CD4-positive, alpha-beta memory T cell (primary cell): ENCODE measurements at regions of chr1 and their contacts with region 1.

Region 1: GRCh38 chr1:147640553-147641165 is 29.7 kb downstream of the ACP6 start:
- DNase-seq: peak; percentile 72 to 85 (median 73)
- H3K4me3 ChIP-seq: no peak overlapping the region
- H3K4me3 Mint-ChIP-seq: peak overlapping the region in 7 of 8 donors; percentile 48 to 80 (median 69)
- H3K27ac ChIP-seq: no peak overlapping the region
- H3K27ac Mint-ChIP-seq: peak overlapping the region in 5 of 7 donors; percentile 74 to 92 (median 79)
- H3K4me1 ChIP-seq: peaks cover 24% of the 10 kb centered on the region
- H3K4me1 Mint-ChIP-seq: peaks cover 26 to 66% (median 44%) of the 10 kb centered on the region in 4 donors
- H3K27me3 ChIP-seq: no peaks in the 10 kb centered on the region
- H3K27me3 Mint-ChIP-seq: no peaks in the 10 kb centered on the region

Region 2: DNA sequence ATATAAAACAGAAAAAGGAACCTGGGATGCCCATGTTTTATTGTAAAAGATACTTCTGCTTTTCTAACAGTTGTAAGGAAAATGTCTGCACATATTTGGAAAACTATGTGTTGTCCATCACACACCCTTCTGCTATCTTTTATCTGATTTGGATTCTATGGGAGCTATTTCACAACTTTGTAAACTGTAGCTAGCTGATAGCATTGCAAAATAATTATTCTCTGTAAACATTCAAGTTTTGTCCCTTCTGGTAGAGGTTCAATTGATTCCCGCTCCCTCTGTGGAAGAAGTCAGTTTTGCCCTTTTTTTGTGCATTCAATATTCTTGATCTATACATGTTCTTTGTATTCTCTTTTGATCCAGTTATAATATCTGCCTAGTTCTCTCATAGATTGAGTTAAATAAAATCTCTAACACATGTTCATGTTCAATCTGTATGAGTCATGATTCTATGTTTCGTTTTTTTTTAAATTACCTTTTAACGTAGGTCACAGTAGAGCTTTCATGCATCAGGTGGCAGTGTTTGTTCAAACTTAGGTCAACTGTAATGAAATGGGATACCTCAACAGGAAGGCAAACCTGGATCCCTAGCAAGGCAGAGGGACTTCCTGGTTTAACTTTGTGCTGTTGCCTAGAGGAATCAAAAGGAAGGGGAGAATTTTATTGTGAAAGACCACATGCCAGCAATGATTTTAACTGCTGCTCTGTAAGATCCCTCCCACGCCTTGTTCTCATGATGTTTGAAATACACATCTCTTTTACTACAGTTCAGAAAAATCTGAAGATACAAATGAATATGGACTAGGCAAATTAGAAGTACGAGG is 125.4 kb before region 1 on chr1:
- CTCF ChIA-PET with region 1: interaction called, 60 read pairs
- POLR2A ChIA-PET with region 1: no interaction called
- intact Hi-C with region 1: loop called (anchors 1 kb)
- DNase-seq: peak in 4 of 5 donors; percentile 9 to 29 (median 24)
- H3K4me3 ChIP-seq: no peak overlapping the region
- H3K4me3 Mint-ChIP-seq: no peak overlapping the region
- H3K27ac ChIP-seq: no peak overlapping the region
- H3K27ac Mint-ChIP-seq: peak overlapping the region in 2 of 7 donors; percentile 39 to 51
- H3K4me1 ChIP-seq: no peaks in the 10 kb centered on the region
- H3K4me1 Mint-ChIP-seq: peaks cover 5 to 7% (median 6%) of the 10 kb centered on the region in 4 donors
- H3K27me3 ChIP-seq: no peaks in the 10 kb centered on the region
- H3K27me3 Mint-ChIP-seq: peaks cover 0 to 9% of the 10 kb centered on the region in 2 donors

Region 3: DNA sequence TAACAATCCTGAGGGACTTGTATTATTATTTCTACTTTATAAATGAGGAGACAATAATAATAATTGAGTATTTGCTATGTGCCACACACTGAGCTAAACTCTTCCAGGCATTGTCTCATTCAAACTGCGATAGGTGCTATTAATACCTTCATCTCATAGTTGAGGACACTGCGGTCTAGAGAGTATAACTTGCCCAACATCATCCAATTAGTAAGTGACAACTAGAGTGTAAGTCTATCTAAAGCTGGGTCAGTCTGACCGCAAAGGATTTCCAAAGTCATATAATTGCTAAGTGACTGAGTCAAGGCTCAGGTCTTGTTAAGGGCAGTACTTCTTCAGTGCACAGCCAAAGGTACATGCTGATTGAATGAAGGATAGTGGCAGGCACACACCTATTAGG is 89.6 kb before region 1 on chr1:
- CTCF ChIA-PET with region 1: no interaction called
- POLR2A ChIA-PET with region 1: no interaction called
- intact Hi-C with region 1: no loop called
- DNase-seq: no peak
- H3K4me3 ChIP-seq: no peak overlapping the region
- H3K4me3 Mint-ChIP-seq: no peak overlapping the region
- H3K27ac ChIP-seq: no peak overlapping the region
- H3K27ac Mint-ChIP-seq: no peak overlapping the region
- H3K4me1 ChIP-seq: peaks cover 12% of the 10 kb centered on the region
- H3K4me1 Mint-ChIP-seq: peaks cover 8 to 29% (median 22%) of the 10 kb centered on the region in 4 donors
- H3K27me3 ChIP-seq: no peaks in the 10 kb centered on the region
- H3K27me3 Mint-ChIP-seq: no peaks in the 10 kb centered on the region

Region 4: GRCh38 chr1:147599362-147600118 is 41.1 kb before region 1 on chr1:
- CTCF ChIA-PET with region 1: no interaction called
- POLR2A ChIA-PET with region 1: no interaction called
- intact Hi-C with region 1: loop called (anchors 5 kb)
- DNase-seq: peak; percentile 94 to 96 (median 95)
- H3K4me3 ChIP-seq: peak overlapping the region; percentile 67 to 72
- H3K4me3 Mint-ChIP-seq: peak overlapping the region; percentile 86 to 92 (median 90)
- H3K27ac ChIP-seq: peak overlapping the region; percentile 47
- H3K27ac Mint-ChIP-seq: peak overlapping the region; percentile 48 to 91 (median 85)
- H3K4me1 ChIP-seq: peaks cover 24% of the 10 kb centered on the region
- H3K4me1 Mint-ChIP-seq: peaks cover 15 to 33% (median 25%) of the 10 kb centered on the region in 4 donors
- H3K27me3 ChIP-seq: no peaks in the 10 kb centered on the region
- H3K27me3 Mint-ChIP-seq: no peaks in the 10 kb centered on the region

Region 5: GRCh38 chr1:147670317-147671041 is 29.8 kb after region 1 on chr1 and contains the start of gene ACP6:
- CTCF ChIA-PET with region 1: interaction called, 7 read pairs
- POLR2A ChIA-PET with region 1: interaction called, 5 read pairs
- intact Hi-C with region 1: loop called (anchors 2 kb)
- DNase-seq: peak; percentile 80 to 90 (median 84)
- H3K4me3 ChIP-seq: peak within 1 kb of the TSS; percentile 79 to 91
- H3K4me3 Mint-ChIP-seq: peak within 1 kb of the TSS; percentile 96 to 99 (median 97)
- H3K27ac ChIP-seq: peak within 1 kb of the TSS; percentile 70
- H3K27ac Mint-ChIP-seq: peak within 1 kb of the TSS; percentile 86 to 97 (median 93)
- H3K4me1 ChIP-seq: peaks cover 14% of the 10 kb centered on the region
- H3K4me1 Mint-ChIP-seq: peaks cover 17 to 34% (median 22%) of the 10 kb centered on the region in 4 donors
- H3K27me3 ChIP-seq: no peaks in the 10 kb centered on the region
- H3K27me3 Mint-ChIP-seq: peaks cover 0 to 4% of the 10 kb centered on the region in 2 donors
- total RNA-seq, gene ACP6: 22.0 to 22.7 TPM

Region 6: DNA sequence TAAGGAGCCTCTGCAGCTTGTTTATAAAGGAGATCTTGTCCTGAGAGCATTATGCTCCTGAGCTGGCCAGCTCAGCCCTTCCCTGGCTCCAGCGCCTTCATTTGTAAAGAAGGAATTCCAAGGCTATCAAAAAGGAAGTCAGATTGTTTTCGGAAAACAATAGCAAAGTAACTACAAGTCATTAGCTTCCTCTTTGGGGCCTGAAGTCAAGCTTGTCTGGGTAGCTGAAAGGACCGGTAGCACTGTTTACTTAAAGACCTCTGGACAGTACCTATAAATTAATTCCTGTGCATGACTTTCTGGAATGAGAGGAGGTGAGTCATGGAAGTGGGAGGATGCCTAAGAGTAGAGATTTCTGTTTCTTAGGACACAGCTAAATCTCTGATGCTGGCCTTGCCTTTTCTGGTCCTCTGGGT is 140.4 kb after region 1 on chr1:
- CTCF ChIA-PET with region 1: no interaction called
- POLR2A ChIA-PET with region 1: no interaction called
- intact Hi-C with region 1: no loop called
- DNase-seq: no peak
- H3K4me3 ChIP-seq: no peak overlapping the region
- H3K4me3 Mint-ChIP-seq: no peak overlapping the region
- H3K27ac ChIP-seq: no peak overlapping the region
- H3K27ac Mint-ChIP-seq: no peak overlapping the region
- H3K4me1 ChIP-seq: no peaks in the 10 kb centered on the region
- H3K4me1 Mint-ChIP-seq: no peaks in the 10 kb centered on the region
- H3K27me3 ChIP-seq: no peaks in the 10 kb centered on the region
- H3K27me3 Mint-ChIP-seq: peaks cover 8 to 20% of the 10 kb centered on the region in 2 donors

Region 7: GRCh38 chr1:147890177-147890790 is 249.6 kb after region 1 on chr1:
- CTCF ChIA-PET with region 1: interaction called, 43 read pairs
- POLR2A ChIA-PET with region 1: no interaction called
- intact Hi-C with region 1: loop called (anchors 1 kb)
- DNase-seq: peak; percentile 47 to 60 (median 51)
- H3K4me3 ChIP-seq: no peak overlapping the region
- H3K4me3 Mint-ChIP-seq: no peak overlapping the region
- H3K27ac ChIP-seq: no peak overlapping the region
- H3K27ac Mint-ChIP-seq: peak overlapping the region in 1 of 7 donors; percentile 6
- H3K4me1 ChIP-seq: no peaks in the 10 kb centered on the region
- H3K4me1 Mint-ChIP-seq: peaks cover 0 to 9% (median under 1%) of the 10 kb centered on the region in 4 donors
- H3K27me3 ChIP-seq: no peaks in the 10 kb centered on the region
- H3K27me3 Mint-ChIP-seq: peaks cover 1 to 3% of the 10 kb centered on the region in 2 donors